ENCODE measurements at regions of chr9 and their contacts with region 1.

Region 1: GRCh38 chr9:74773886-74774479 is 113.7 kb downstream of the TRPM6 start:
- DNase-seq: peak; percentile 21
- H3K4me3 ChIP-seq: no peak overlapping the region
- CTCF ChIP-seq: peak; percentile 70

Region 2: GRCh38 chr9:74534841-74535240 is 239.1 kb before region 1 on chr9:
- CTCF ChIA-PET with region 1: no interaction called
- POLR2A ChIA-PET with region 1: no interaction called
- DNase-seq: no peak
- H3K4me3 ChIP-seq: no peak overlapping the region
- CTCF ChIP-seq: no peak

Region 3: GRCh38 chr9:74721696-74722640 is 52.0 kb before region 1 on chr9:
- CTCF ChIA-PET with region 1: no interaction called
- POLR2A ChIA-PET with region 1: no interaction called
- DNase-seq: no peak
- H3K4me3 ChIP-seq: no peak overlapping the region
- CTCF ChIP-seq: no peak

Region 4: DNA sequence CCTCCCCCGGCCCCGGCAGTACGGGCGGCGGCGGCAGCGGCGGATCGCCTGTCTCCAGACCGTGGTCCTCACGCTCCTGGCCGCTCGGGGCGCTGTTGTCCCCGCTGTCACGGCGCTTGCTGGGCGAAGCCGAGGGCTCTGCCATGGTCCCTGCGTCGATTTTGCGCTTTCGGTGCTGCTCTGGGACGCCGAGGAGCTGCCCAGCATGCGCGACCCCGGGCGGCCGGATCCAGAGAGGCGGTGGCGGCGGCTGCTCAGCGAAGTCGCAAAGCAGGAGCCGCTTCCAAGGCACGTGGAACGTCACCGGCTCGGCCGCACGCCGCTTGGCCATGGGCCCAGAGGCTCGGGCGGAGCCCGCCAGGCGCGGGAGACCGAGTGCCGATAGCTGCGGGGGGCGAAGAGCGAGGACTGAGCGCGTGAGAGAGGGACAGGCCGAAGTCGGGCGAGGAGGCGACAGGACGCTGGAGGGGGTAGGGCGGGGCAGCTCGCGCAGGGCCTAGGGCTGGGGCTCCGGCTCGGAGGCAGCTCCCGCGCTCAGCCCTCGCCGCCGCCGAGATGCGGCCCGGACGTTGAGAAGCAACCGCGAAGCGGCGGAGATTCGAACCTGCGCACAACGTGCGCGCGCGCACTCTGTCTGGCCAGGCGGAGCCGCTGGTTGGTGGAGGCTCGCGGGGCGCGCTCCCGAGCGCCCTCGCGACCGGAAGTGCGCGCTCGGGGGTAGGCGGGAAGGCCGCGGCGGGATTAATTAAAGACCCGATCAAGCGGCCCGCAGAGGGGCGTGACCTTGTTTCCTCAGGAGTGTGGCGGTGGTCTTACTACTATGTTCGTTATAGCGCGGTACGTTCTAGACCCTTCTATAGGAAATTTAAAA is 178.5 kb after region 1 on chr9 and contains the start of gene C9orf40:
- CTCF ChIA-PET with region 1: interaction called, 55 read pairs
- POLR2A ChIA-PET with region 1: no interaction called
- DNase-seq: no peak
- H3K4me3 ChIP-seq: peak within 1 kb of the TSS; percentile 97
- CTCF ChIP-seq: peak; percentile 97

Region 5: DNA sequence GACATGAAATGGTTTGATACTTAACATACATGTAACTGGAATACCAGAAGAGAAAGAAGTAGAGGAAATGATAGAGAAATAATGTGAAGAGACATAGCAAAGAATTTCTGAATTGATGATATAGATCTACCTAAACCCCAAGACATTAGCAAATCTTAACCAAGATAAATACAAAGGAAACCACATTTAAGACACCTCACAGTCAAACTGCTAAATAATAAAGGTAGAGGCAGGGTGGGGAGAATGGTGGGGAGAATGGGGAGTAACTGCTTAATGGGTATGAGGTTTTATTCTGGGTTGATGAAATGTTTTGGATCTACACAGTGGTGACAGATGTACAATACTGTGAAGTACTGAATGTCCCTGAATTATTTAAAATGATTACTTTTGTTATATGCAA is 236.6 kb after region 1 on chr9:
- CTCF ChIA-PET with region 1: interaction called, 387 read pairs
- POLR2A ChIA-PET with region 1: no interaction called
- DNase-seq: no peak
- H3K4me3 ChIP-seq: no peak overlapping the region
- CTCF ChIP-seq: no peak

Region 6: DNA sequence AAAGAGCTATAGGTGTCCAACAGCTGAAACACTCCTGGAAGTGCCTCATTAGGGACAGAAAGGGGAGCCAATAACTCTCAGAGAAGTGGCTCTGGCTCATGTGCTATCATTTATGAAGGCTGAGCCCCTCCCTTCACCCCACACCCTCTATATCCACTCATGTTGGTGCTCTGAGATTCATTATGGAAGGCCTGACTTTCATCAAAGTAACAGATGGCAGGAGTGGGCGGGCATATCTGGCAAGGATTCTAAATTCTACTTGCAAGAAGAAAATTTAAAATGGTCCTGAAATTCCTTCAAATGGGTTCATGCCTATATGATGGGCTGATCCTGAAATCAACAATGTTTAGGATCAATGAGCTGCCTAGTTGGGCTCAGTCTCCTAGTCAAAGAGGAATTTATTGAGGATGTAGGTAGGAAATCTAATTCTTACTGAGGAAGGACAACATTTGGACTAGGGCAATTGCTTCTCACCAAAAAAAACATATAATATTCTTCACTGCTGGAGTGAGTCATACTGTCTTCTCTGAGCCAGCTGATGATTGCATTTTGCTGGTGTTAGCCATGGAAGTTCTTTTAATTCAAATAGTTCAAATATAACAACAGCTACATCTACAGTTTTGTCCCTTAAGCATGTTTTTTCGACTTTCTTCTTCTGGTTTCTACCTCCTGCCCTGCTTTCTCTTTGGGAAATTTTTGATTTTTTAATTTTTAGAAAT is 290.5 kb after region 1 on chr9:
- CTCF ChIA-PET with region 1: interaction called, 14 read pairs
- POLR2A ChIA-PET with region 1: interaction called, 3 read pairs
- DNase-seq: no peak
- H3K4me3 ChIP-seq: no peak overlapping the region
- CTCF ChIP-seq: no peak

Region 7: GRCh38 chr9:75088260-75088905 is 314.4 kb after region 1 on chr9 and contains the start of gene OSTF1:
- CTCF ChIA-PET with region 1: interaction called, 77 read pairs
- POLR2A ChIA-PET with region 1: no interaction called
- DNase-seq: peak; percentile 63
- H3K4me3 ChIP-seq: peak within 1 kb of the TSS; percentile 94
- CTCF ChIP-seq: no peak

Measured in AG04449 (cell line).